CD8-positive, alpha-beta T cell (primary cell): ENCODE measurements at regions of chr20 and their contacts with region 1.

Region 1: DNA sequence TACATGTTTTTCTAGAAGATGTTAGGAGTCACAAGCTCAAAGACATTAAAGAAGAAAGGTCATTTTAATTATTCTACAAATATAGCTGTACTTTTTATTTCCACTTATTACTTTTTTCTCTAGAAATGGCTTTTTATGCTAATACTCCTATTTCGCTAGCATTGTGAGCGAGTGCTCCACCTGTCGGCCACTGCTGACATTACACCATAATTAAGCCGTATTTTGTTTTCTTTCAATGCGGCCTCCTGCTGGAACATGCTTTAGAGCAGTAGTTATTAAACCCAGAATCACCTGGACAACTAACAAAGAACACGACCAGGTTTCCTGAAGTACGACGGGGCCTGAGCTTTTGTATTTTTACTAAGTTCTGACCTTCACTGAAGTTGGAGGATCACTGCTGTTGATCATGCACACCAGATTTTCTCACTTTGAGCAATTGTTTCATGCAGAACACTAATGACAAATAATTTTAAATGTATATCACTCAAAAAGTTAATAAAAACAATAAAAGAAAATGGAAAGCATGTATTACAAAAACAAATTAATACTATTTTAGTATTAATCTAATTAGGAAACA is 74.1 kb upstream of the PAK5 start:
- DNase-seq: peak in 6 of 9 experiments; percentile 5 to 33 (median 13)
- ATAC-seq: no peak
- H3K4me3 ChIP-seq: no peak overlapping the region
- H3K4me3 Mint-ChIP-seq: no peak overlapping the region
- H3K27ac ChIP-seq: no peak overlapping the region
- H3K27ac Mint-ChIP-seq: no peak overlapping the region
- H3K4me1 ChIP-seq: no peaks in the 10 kb centered on the region
- H3K4me1 Mint-ChIP-seq: no peaks in the 10 kb centered on the region
- H3K27me3 ChIP-seq: no peaks in the 10 kb centered on the region
- H3K27me3 Mint-ChIP-seq: peaks cover 13% of the 10 kb centered on the region
- CTCF ChIP-seq: peak; percentile 83

Region 2: DNA sequence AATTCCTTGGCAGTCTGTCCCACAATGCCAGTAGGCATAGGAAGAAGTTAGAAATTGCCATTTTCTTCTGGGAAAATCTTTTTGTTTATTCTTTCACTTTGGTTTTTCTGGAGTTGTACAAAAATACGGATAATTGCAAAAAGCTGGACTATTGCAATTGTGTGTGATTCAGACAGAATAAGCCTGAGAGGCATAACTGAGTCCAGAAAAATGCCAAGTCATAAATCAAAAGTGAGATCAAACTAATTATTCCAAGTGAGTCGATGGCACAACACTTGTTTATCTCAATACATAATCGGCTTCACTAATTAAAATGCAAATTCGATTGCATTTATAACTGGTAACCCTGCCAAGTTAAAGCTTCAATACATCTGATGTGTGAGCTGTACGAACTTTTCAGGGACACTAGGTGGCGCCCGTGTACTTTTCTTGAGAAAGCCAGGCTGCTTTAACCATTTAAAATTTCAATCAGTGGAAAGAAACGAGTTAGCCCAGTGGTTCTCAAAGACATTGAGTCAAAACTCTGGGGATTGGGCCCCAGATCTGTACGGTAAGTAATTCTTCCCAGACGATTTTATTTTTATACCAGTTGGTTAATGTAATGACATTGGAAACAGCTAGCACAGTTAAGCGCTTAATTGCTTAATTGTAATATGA is 296.0 kb before region 1 on chr20:
- CTCF ChIA-PET with region 1: interaction called, 3 read pairs
- POLR2A ChIA-PET with region 1: no interaction called
- intact Hi-C with region 1: loop called (anchors 5 to 10 kb)
- DNase-seq: peak in 8 of 9 experiments; percentile 7 to 62 (median 42)
- ATAC-seq: peak; percentile 36
- H3K4me3 ChIP-seq: no peak overlapping the region
- H3K4me3 Mint-ChIP-seq: no peak overlapping the region
- H3K27ac ChIP-seq: no peak overlapping the region
- H3K27ac Mint-ChIP-seq: no peak overlapping the region
- H3K4me1 ChIP-seq: no peaks in the 10 kb centered on the region
- H3K4me1 Mint-ChIP-seq: no peaks in the 10 kb centered on the region
- H3K27me3 ChIP-seq: no peaks in the 10 kb centered on the region
- H3K27me3 Mint-ChIP-seq: peaks cover 2% of the 10 kb centered on the region
- CTCF ChIP-seq: peak; percentile 66